ENCODE measurements at regions of chr4 and their contacts with region 1.

Region 1: DNA sequence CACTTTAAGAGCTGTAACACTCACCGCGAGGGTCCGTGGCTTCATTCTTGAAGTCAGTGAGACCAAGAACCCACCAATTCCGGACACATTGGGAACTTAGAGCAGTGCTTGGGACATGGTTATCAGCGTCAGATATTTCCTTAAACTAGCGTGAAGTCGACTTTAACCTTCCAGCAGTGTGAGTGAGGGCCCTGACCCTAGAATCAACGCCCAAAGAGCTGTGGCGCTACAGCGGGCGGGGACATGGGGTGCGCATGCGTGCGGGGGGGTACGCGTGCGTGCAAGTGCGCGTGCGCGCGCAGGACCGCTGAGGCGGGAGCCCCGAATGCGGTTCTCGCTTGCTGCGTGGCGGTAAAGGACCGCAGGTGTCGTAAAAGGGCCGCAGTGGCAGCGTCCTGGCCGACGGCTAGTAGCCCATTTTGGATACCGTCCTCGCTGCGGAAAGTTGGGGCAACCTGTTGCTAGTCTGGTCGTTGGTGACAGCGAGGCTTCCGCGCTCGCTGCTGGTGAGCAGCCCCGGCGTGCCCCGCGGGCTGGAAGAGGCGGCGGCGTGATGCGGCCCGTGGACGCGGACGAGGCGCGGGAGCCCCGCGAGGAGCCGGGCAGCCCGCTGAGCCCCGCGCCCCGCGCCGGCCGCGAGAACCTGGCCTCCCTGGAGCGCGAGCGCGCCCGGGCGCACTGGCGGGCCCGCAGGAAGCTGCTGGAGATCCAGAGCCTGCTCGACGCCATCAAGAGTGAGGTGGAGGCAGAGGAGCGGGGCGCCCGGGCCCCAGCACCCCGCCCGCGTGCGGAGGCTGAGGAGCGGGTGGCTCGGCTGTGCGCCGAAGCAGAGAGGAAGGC is 19.8 kb upstream of the S100P start:
- DNase-seq: peak; percentile 92 to 97 (median 95)
- H3K4me3 ChIP-seq: peak overlapping the region; percentile 65
- H3K4me3 Mint-ChIP-seq: peak overlapping the region; percentile 95 to 99 (median 97)
- H3K27ac ChIP-seq: peak overlapping the region; percentile 84
- H3K27ac Mint-ChIP-seq: peak overlapping the region; percentile 97 to 99 (median 98)
- H3K4me1 ChIP-seq: peaks cover 30% of the 10 kb centered on the region
- H3K4me1 Mint-ChIP-seq: peaks cover 50 to 51% (median 50%) of the 10 kb centered on the region in 3 donors
- H3K27me3 ChIP-seq: no peaks in the 10 kb centered on the region
- H3K27me3 Mint-ChIP-seq: peaks cover 0 to 3% of the 10 kb centered on the region in 2 donors

Region 2: GRCh38 chr4:6640292-6641163 is 33.4 kb before region 1 on chr4 and contains the start of gene MRFAP1:
- CTCF ChIA-PET with region 1: interaction called, 25 read pairs
- POLR2A ChIA-PET with region 1: interaction called, 51 read pairs
- DNase-seq: peak; percentile 91 to 97 (median 93)
- H3K4me3 ChIP-seq: peak within 1 kb of the TSS; percentile 98
- H3K4me3 Mint-ChIP-seq: peak within 1 kb of the TSS; percentile 94 to 100 (median 99)
- H3K27ac ChIP-seq: peak within 1 kb of the TSS; percentile 96
- H3K27ac Mint-ChIP-seq: peak within 1 kb of the TSS; percentile 96 to 100 (median 100)
- H3K4me1 ChIP-seq: peaks cover 31% of the 10 kb centered on the region
- H3K4me1 Mint-ChIP-seq: peaks cover 37 to 52% (median 50%) of the 10 kb centered on the region in 3 donors
- H3K27me3 ChIP-seq: no peaks in the 10 kb centered on the region
- H3K27me3 Mint-ChIP-seq: peaks cover 0 to 3% of the 10 kb centered on the region in 2 donors
- total RNA-seq, gene MRFAP1: 122 to 126 TPM

Region 3: GRCh38 chr4:6688879-6689505 is 15.1 kb after region 1 on chr4:
- CTCF ChIA-PET with region 1: interaction called, 369 read pairs
- POLR2A ChIA-PET with region 1: interaction called, 77 read pairs
- DNase-seq: peak; percentile 62 to 90 (median 71)
- H3K4me3 ChIP-seq: peak overlapping the region; percentile 57
- H3K4me3 Mint-ChIP-seq: peak overlapping the region; percentile 91 to 99 (median 97)
- H3K27ac ChIP-seq: peak overlapping the region; percentile 72
- H3K27ac Mint-ChIP-seq: peak overlapping the region; percentile 93 to 100 (median 99)
- H3K4me1 ChIP-seq: peaks cover 65% of the 10 kb centered on the region
- H3K4me1 Mint-ChIP-seq: peaks cover 69 to 84% (median 82%) of the 10 kb centered on the region in 3 donors
- H3K27me3 ChIP-seq: no peaks in the 10 kb centered on the region
- H3K27me3 Mint-ChIP-seq: no peaks in the 10 kb centered on the region

Region 4: GRCh38 chr4:6709230-6710114 is 35.6 kb after region 1 on chr4 and contains the start of gene MRFAP1L1:
- CTCF ChIA-PET with region 1: interaction called, 369 read pairs
- POLR2A ChIA-PET with region 1: interaction called, 50 read pairs
- DNase-seq: peak; percentile 96 to 98 (median 97)
- H3K4me3 ChIP-seq: peak within 1 kb of the TSS; percentile 88
- H3K4me3 Mint-ChIP-seq: peak within 1 kb of the TSS; percentile 98 to 100 (median 99)
- H3K27ac ChIP-seq: peak within 1 kb of the TSS; percentile 88
- H3K27ac Mint-ChIP-seq: peak within 1 kb of the TSS; percentile 93 to 100 (median 98)
- H3K4me1 ChIP-seq: peaks cover 51% of the 10 kb centered on the region
- H3K4me1 Mint-ChIP-seq: peaks cover 57 to 64% (median 64%) of the 10 kb centered on the region in 3 donors
- H3K27me3 ChIP-seq: no peaks in the 10 kb centered on the region
- H3K27me3 Mint-ChIP-seq: no peaks in the 10 kb centered on the region
- total RNA-seq, gene MRFAP1L1: 54.9 to 55.9 TPM

Region 5: DNA sequence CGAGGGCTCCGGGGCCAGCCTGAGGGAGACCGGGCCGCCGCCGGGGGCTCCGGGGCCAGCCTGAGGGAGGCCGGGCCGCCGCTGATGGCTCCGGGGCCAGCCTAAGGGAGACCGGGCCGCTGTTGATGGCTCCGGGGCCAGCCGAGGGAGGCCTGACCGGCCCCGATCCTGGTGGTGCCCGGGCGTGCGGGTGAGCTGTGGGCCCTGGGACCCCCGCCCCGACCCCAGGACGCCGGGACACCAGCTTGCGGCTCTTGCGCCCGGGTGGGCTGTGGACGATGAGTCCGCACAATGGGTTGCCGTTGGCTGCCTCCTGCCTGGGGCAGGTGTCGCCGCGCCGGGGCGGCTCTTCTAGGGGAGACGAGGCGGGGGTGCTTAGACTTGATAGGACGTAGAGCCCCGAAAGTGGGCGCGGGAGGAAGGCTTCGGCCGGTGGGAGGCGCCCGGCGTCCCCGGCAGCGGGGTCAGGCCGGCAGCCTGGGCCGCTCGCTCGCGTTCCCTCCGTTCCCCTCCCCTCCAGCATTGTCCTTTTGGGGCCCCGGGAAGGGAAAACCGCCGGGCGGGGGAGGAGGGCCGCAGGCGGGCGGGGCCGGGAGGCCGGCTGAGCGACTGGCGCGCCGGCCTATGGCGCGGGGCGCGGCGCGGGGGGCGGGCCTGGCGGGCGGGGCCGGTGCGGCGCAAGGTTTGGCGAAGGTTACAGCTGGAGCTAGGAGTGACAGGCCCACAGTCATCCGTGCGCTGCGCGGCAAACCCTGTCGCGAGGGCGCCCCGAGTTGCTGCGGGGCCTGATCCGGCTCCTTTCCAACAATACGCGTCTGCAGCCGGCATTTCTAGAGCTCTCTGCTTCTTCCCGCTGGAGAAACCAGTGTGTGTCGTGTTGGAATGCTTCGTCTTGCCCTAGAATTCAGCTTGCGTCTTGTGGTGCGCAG is 109.4 kb after region 1 on chr4:
- CTCF ChIA-PET with region 1: interaction called, 17 read pairs
- POLR2A ChIA-PET with region 1: interaction called, 8 read pairs
- DNase-seq: peak; percentile 83 to 91 (median 85)
- H3K4me3 ChIP-seq: peak overlapping the region; percentile 75
- H3K4me3 Mint-ChIP-seq: peak overlapping the region; percentile 83 to 95 (median 87)
- H3K27ac ChIP-seq: peak overlapping the region; percentile 85
- H3K27ac Mint-ChIP-seq: peak overlapping the region; percentile 87 to 97 (median 92)
- H3K4me1 ChIP-seq: peaks cover 44% of the 10 kb centered on the region
- H3K4me1 Mint-ChIP-seq: peaks cover 60 to 69% (median 68%) of the 10 kb centered on the region in 3 donors
- H3K27me3 ChIP-seq: no peaks in the 10 kb centered on the region
- H3K27me3 Mint-ChIP-seq: no peaks in the 10 kb centered on the region

Region 6: DNA sequence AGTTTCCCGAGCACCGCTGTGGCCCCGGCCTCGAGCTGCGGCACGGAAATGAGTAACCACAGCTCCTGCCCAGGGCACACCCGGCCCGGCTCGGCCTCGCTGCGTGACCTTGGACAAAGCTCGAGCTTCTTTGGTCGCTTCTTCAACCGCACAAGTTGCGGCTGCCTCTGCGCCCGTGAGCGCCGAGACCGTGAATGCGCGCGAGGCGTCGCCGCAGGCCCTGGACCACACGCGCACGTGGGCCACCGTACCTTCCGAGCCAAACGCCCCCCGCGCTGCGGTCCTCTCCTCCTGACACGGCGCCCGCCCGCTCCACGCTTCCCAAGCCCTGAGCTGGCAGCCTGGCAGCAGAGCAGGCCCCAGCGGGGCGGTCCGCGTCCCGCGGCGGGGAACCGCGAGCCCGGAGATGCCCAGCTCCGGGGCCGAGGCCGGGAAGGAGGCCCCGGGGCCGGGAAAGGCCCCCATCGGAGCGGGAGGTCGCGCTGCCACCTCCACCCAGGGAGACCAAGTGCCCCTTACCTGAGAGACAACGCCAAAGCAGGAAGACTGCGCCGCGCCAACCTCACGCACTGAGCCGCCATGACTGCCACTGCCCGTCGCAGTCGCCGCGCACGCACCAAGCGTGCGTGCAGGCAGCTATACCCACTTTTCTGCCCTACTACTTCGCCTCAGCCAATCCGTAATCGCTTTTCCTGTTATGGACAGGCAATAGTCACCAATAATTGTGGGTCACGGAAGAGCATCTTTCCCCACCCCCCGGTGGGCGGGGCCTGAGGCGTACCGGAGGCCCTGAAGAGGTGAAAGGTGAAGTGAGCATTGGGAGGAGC is 393.8 kb after region 1 on chr4 and contains the start of gene GRPEL1:
- CTCF ChIA-PET with region 1: interaction called, 10 read pairs
- POLR2A ChIA-PET with region 1: interaction called, 3 read pairs
- DNase-seq: peak; percentile 100
- H3K4me3 ChIP-seq: peak within 1 kb of the TSS; percentile 82
- H3K4me3 Mint-ChIP-seq: peak within 1 kb of the TSS; percentile 91 to 96 (median 94)
- H3K27ac ChIP-seq: peak within 1 kb of the TSS; percentile 87
- H3K27ac Mint-ChIP-seq: peak within 1 kb of the TSS; percentile 75 to 99 (median 94)
- H3K4me1 ChIP-seq: peaks cover 34% of the 10 kb centered on the region
- H3K4me1 Mint-ChIP-seq: peaks cover 39 to 63% (median 57%) of the 10 kb centered on the region in 3 donors
- H3K27me3 ChIP-seq: no peaks in the 10 kb centered on the region
- H3K27me3 Mint-ChIP-seq: peaks cover 0 to 7% of the 10 kb centered on the region in 2 donors
- total RNA-seq, gene GRPEL1: 94.0 to 94.5 TPM

Measured in CD8-positive, alpha-beta memory T cell (primary cell).